ENCODE measurements at regions of chr1 and their contacts with region 1.

Region 1: GRCh38 chr1:19240673-19241538 is 10.4 kb downstream of the EMC1 start:
- DNase-seq: peak; percentile 60
- H3K4me3 ChIP-seq: no peak overlapping the region
- H3K27ac ChIP-seq: no peak overlapping the region
- H3K4me1 ChIP-seq: no peaks in the 10 kb centered on the region
- CTCF ChIP-seq: peak; percentile 92

Region 2: GRCh38 chr1:19179597-19180264 is 61.2 kb before region 1 on chr1:
- CTCF ChIA-PET with region 1: no interaction called
- POLR2A ChIA-PET with region 1: no interaction called
- intact Hi-C with region 1: loop called (anchors 5 kb)
- DNase-seq: peak; percentile 19
- H3K4me3 ChIP-seq: no peak overlapping the region
- H3K27ac ChIP-seq: no peak overlapping the region
- H3K4me1 ChIP-seq: no peaks in the 10 kb centered on the region
- CTCF ChIP-seq: peak; percentile 58; the same call in 1 of the 2 replicates

Region 3: GRCh38 chr1:19723834-19724233 is 482.9 kb after region 1 on chr1:
- CTCF ChIA-PET with region 1: no interaction called
- POLR2A ChIA-PET with region 1: no interaction called
- intact Hi-C with region 1: no loop called
- DNase-seq: no peak
- H3K4me3 ChIP-seq: no peak overlapping the region
- H3K27ac ChIP-seq: no peak overlapping the region
- H3K4me1 ChIP-seq: no peaks in the 10 kb centered on the region
- CTCF ChIP-seq: no peak

Measured in OCI-LY7 (cell line).